Ascending aorta (tissue), 2 donors: ENCODE measurements at regions of chr1 and their contacts with region 1.

Region 1: DNA sequence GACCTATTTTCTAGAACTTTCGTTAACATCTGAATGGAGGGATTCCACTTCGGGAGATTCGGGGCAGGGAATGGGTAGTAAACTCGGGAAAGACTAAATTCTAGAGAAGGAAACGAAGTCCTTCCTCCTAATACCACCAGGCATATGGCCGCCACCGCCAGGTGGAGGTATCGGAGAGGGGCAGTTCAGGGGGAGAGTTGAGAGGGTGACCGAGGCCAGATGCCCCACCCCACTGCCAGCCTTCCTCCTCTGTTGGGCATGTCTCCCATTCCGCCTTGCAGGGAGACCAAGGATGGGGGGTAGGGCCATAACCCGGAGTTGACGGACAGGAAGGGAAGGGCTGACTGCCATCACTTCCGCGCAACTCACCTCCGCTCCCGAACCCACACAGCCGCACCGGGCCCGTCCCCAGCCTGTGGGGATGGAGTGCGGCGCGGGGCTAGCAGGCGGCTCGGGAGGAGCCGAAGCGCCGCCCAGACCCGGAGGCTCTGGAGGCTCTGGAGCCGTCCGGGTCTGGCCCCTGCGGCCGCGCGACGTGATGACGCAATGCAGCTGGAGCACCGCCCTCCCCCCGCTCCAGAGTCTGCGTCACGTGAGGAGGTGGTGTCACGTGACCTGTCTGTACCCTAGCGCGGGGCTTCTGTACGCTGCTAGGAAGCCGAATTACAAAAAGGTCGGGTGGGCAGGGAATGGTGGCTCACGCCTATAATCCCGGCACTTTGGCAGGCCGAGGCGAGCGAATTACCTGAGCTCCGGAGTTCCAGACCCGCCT is at the start of gene KLHL12:
- DNase-seq: peak; percentile 72 to 98
- H3K4me3 ChIP-seq: peak within 1 kb of the TSS; percentile 73 to 84
- H3K27ac ChIP-seq: peak within 1 kb of the TSS; percentile 92 to 95
- H3K4me1 ChIP-seq: peaks cover 0 to 3% of the 10 kb centered on the region in 2 donors
- H3K27me3 ChIP-seq: no peaks in the 10 kb centered on the region
- CTCF ChIP-seq: peak; percentile 46 to 65 (median 54)
- total RNA-seq, gene KLHL12: 17.8 TPM

Region 2: DNA sequence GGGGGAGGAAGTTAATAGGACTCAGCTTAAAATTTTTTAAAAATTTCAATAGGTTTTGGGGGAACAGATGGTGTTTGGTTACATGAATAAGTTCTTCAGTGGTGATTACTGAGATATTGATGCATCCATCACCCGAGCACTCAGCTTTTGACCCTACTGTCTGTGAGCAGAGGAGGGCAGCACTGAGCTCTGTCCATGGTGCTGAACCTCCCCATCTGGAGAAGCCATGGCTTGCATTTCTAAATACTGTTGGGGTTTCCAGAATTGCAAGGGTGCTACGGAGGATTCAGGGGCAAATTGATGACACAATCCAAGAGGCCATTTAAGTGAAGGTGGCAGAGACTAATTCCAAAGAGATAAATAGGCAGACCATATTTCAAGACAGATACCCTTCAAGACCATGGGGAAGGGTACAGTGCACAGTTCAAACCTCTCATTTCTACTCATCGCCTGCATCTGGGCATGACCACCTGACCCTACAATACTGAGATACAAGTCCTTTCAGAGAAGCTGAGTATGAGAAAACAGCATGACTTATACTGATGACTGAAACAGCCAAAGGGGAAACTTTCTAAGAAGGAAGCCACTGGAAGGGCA is 233.8 kb before region 1 on chr1:
- intact Hi-C with region 1: no loop called
- DNase-seq: peak in 1 of 2 donors; percentile 69
- H3K4me3 ChIP-seq: no peak overlapping the region
- H3K27ac ChIP-seq: no peak overlapping the region
- H3K4me1 ChIP-seq: no peaks in the 10 kb centered on the region
- H3K27me3 ChIP-seq: no peaks in the 10 kb centered on the region
- CTCF ChIP-seq: peak in 1 of 3 experiments; percentile 39

Region 3: DNA sequence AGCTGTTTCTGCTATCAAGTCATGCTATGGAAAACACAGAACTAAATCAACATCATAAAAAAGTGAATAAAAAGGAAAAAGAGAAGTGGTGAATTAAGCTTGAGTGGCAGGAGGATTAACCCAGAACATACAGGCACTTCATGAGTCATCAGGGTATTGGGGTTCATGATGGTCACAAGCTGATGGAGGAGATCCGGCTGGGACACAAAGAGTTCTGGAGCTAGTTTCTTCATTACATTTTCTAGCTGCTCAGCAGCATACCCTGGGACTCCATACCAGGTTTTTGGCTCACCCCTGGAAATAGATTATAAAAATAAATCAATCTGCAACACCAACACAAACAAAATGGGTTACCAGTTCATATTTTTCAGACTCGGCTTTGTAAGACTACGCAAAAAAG is 174.1 kb before region 1 on chr1:
- intact Hi-C with region 1: no loop called
- DNase-seq: no peak
- H3K4me3 ChIP-seq: no peak overlapping the region
- H3K27ac ChIP-seq: no peak overlapping the region
- H3K4me1 ChIP-seq: no peaks in the 10 kb centered on the region
- H3K27me3 ChIP-seq: no peaks in the 10 kb centered on the region
- CTCF ChIP-seq: no peak

Region 4: GRCh38 chr1:202888531-202889360 is 38.2 kb before region 1 on chr1 and contains the start of gene RABIF:
- intact Hi-C with region 1: loop called (anchors 1 kb)
- DNase-seq: peak; percentile 84 to 97
- H3K4me3 ChIP-seq: peak within 1 kb of the TSS; percentile 75 to 79
- H3K27ac ChIP-seq: peak within 1 kb of the TSS; percentile 78 to 94
- H3K4me1 ChIP-seq: peaks cover 0 to 13% of the 10 kb centered on the region in 2 donors
- H3K27me3 ChIP-seq: no peaks in the 10 kb centered on the region
- CTCF ChIP-seq: peak in 1 of 3 experiments; percentile 20
- total RNA-seq, gene RABIF: 1.9 TPM

Region 5: GRCh38 chr1:202957733-202958543 is 31.0 kb after region 1 on chr1 and contains the start of gene ADIPOR1:
- intact Hi-C with region 1: loop called (anchors 1 kb)
- DNase-seq: peak; percentile 59 to 94
- H3K4me3 ChIP-seq: peak within 1 kb of the TSS; percentile 80 to 94
- H3K27ac ChIP-seq: peak within 1 kb of the TSS; percentile 95 to 96
- H3K4me1 ChIP-seq: peaks cover 3 to 21% of the 10 kb centered on the region in 2 donors
- H3K27me3 ChIP-seq: no peaks in the 10 kb centered on the region
- CTCF ChIP-seq: peak in 2 of 3 experiments; percentile 17 to 29
- total RNA-seq, gene ADIPOR1: 67.9 TPM

Region 6: GRCh38 chr1:202968840-202969295 is 42.0 kb after region 1 on chr1:
- intact Hi-C with region 1: loop called (anchors 1 kb)
- DNase-seq: peak; percentile 41 to 76
- H3K4me3 ChIP-seq: peak overlapping the region in 1 of 2 donors; percentile 99
- H3K27ac ChIP-seq: peak overlapping the region; percentile 94 to 99
- H3K4me1 ChIP-seq: peaks cover 4 to 19% of the 10 kb centered on the region in 2 donors
- H3K27me3 ChIP-seq: no peaks in the 10 kb centered on the region
- CTCF ChIP-seq: peak; percentile 42 to 54 (median 46)

Region 7: DNA sequence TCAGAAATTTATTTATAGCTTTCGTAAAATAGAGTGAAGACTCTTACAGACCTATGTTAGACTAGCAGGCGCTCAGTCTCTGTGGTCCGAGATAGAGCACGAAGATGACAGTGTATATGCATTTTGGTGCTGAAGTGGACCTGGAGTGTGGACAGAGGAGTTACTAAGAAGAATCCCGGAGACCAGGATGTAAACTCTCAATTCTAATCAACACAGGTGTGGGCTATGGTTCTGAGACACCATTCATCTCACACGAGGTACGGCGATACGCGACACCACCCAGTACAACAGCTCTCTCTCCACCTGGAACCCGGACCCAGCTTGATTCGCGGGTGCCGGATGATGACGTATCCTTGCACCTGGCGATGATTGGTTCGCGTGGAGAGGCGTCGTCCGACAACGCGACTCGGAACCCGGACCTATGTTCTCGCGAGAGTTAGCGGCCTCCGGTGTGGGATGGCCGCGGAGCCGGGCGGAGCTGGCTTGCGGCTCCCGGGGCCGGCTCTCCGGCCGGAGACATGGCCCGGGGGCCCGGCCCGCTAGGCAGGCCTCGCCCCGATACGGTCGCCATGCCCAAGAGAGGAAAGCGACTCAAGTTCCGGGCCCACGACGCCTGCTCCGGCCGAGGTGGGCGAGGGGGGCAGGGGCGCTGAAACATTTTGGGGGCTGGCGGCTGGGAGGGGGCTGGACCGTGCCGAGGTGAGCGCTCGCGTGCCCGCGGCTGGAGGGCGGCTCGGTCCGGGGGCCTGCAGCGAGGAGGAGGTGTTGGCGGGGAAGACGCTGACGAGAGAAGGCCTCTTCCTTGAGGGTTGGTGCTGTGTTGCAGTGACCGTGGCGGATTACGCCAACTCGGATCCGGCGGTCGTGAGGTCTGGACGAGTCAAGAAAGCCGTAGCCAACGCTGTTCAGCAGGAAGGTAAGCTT is 80.3 kb after region 1 on chr1 and contains the start of gene TMEM183A:
- intact Hi-C with region 1: loop called (anchors 1 kb)
- DNase-seq: peak; percentile 83 to 97
- H3K4me3 ChIP-seq: peak within 1 kb of the TSS; percentile 78 to 89
- H3K27ac ChIP-seq: peak within 1 kb of the TSS; percentile 79 to 95
- H3K4me1 ChIP-seq: peaks cover 6 to 14% of the 10 kb centered on the region in 2 donors
- H3K27me3 ChIP-seq: no peaks in the 10 kb centered on the region
- CTCF ChIP-seq: no peak
- total RNA-seq, gene TMEM183A: 44.6 TPM